Sciatic nerve (tissue), 2 donors: ENCODE measurements at regions of chr2 and their contacts with region 1.

Region 1: GRCh38 chr2:118003396-118003824 is 10.5 kb downstream of the CCDC93 start:
- DNase-seq: no peak
- ATAC-seq: peak; percentile 96

Region 2: DNA sequence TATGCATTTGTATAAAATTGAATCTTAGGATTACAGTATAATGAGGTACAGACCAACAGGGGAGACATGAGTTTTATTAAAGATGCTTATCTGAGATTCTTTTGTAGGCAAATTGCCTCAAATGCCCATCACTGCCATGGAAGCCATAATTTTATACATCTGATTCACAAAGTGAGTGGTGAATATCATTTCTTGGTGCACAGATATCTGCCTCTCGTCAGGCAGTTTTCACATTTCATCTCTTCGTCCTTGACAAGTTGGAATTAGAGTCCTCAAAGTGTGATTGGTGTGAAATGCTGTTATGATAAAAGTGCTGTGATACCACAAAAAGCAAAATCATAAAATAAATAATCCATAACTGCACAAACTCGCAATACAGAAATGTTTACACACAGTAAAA is 1791.7 kb before region 1 on chr2:
- intact Hi-C with region 1: no loop called
- DNase-seq: no peak
- ATAC-seq: no peak

Region 3: DNA sequence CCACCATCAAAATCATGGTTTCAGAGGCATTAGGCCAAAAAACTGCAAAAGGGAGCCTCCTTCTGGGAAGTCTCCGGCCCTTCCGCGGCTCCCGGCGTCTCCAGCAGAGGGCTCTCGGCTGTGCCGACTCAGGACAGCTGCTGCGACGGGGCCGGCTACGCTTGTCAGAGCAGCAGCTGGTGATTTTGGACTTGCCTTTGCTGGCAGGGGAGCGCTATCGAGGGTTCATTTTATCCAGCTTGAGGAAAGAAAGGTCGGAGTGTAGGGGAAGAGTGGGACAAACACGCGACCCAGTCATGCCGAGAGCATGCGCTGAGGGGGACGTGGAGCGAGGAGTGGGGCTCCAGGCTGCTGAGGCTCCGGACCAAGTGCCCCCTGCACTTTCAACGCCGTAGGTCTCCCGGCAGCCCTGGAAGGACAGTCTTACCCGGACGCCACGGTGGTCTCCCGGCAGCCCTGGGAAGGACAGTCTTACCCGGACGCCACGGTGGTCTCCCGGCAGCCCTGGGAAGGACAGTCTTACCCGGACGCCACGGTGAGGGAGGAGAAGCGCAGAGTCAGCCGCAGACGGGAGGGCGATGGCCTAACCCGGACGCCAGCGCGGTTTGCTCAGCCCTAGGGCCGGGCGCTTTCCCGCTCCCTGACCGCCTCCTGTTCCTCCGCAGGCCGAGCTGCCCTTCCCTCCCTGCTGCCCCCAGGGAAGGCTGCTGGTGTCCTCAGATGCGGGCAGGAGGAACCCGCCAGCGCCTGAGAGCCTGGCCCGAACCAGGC is 167.2 kb before region 1 on chr2:
- intact Hi-C with region 1: loop called (anchors 10 kb)
- DNase-seq: peak; percentile 89
- ATAC-seq: peak; percentile 96

Region 4: GRCh38 chr2:119028327-119029174 is 1025.1 kb after region 1 on chr2:
- intact Hi-C with region 1: no loop called
- DNase-seq: no peak
- ATAC-seq: no peak